Activated CD8-positive, alpha-beta T cell treated with anti-CD3 and anti-CD28 coated beads for 36 hours (primary cell): ENCODE measurements at regions of chr13 and their contacts with region 1.

Region 1: DNA sequence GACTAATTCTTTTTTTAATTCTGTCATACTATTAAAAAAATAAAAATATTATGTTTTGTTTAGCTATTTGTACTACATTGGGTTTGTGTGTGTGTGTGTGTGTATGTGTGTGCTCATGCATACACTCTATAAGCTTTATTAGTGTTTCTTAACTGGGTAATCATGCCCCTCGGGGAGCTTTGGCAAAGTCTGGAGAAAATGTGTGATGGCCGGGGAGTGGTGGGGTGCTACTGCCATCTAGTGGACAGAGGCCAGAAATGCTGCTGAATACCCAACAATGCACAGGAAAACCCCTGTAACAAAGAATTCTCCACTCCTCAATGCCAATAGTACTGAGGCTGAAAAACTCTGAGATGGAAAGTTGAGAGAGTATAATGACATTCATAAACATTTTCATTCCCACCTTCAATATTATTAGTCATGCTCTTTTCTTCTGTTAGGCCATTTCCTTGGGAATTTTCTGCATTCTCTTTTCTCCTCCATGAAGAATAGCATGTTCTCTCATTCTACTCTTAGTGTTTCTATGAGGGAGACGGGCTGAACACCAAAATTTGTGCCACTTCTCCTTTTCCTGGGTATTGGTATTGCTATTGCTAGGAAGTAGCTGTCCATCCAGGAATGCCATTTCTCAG is 157.3 kb downstream of the DNAJC3 start:
- DNase-seq: peak; percentile 69
- ATAC-seq: peak; percentile 76
- H3K4me3 Mint-ChIP-seq: no peak overlapping the region
- H3K27ac Mint-ChIP-seq: no peak overlapping the region
- H3K4me1 Mint-ChIP-seq: no peaks in the 10 kb centered on the region
- H3K27me3 Mint-ChIP-seq: peaks cover 23% of the 10 kb centered on the region
- CTCF ChIP-seq: peak; percentile 91

Region 2: GRCh38 chr13:95275322-95276036 is 558.8 kb before region 1 on chr13:
- CTCF ChIA-PET with region 1: no interaction called
- POLR2A ChIA-PET with region 1: no interaction called
- intact Hi-C with region 1: no loop called
- DNase-seq: no peak
- ATAC-seq: no peak
- H3K4me3 Mint-ChIP-seq: no peak overlapping the region
- H3K27ac Mint-ChIP-seq: no peak overlapping the region
- H3K4me1 Mint-ChIP-seq: peaks cover 2% of the 10 kb centered on the region
- H3K27me3 Mint-ChIP-seq: no peaks in the 10 kb centered on the region
- CTCF ChIP-seq: no peak

Region 3: DNA sequence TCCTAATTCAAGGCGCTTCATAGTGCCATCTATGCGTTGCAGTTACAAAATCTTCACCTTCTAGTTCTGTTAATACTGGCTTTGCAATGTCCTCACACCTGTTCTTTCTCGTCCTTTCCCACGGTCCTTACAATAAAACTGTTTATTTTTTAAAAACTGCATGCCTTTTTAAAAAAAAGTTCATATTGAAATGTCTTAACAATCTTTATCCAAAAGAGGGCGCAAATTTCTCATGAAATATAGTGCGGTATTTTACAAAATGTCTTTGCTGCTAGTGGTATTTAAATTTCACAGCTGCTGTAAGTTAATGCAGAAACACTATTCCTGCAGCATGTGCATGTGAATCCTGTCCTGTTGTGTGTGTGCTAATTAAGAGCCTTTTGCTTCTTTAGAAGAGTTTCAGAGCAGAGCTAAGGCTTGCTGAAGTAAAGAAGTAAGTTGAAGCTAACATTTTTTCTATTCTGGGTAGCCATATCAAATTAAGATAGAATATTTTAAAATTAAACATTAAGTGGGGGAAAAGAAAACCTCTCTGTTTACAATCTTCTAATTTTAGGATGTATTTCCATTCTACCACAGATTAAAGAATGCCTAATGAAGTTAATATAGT is 297.5 kb before region 1 on chr13:
- CTCF ChIA-PET with region 1: interaction called, 66 read pairs
- POLR2A ChIA-PET with region 1: no interaction called
- intact Hi-C with region 1: loop called (anchors 5 kb)
- DNase-seq: no peak
- ATAC-seq: no peak
- H3K4me3 Mint-ChIP-seq: no peak overlapping the region
- H3K27ac Mint-ChIP-seq: no peak overlapping the region
- H3K4me1 Mint-ChIP-seq: peaks cover 3% of the 10 kb centered on the region
- H3K27me3 Mint-ChIP-seq: peaks cover 23% of the 10 kb centered on the region
- CTCF ChIP-seq: peak; percentile 43

Region 4: GRCh38 chr13:95624020-95624419 is 210.2 kb before region 1 on chr13:
- CTCF ChIA-PET with region 1: interaction called, 168 read pairs
- POLR2A ChIA-PET with region 1: no interaction called
- intact Hi-C with region 1: loop called (anchors 1 kb)
- DNase-seq: peak; percentile 35
- ATAC-seq: peak; percentile 30
- H3K4me3 Mint-ChIP-seq: no peak overlapping the region
- H3K27ac Mint-ChIP-seq: no peak overlapping the region
- H3K4me1 Mint-ChIP-seq: no peaks in the 10 kb centered on the region
- H3K27me3 Mint-ChIP-seq: peaks cover 11% of the 10 kb centered on the region
- CTCF ChIP-seq: peak; percentile 75

Region 5: DNA sequence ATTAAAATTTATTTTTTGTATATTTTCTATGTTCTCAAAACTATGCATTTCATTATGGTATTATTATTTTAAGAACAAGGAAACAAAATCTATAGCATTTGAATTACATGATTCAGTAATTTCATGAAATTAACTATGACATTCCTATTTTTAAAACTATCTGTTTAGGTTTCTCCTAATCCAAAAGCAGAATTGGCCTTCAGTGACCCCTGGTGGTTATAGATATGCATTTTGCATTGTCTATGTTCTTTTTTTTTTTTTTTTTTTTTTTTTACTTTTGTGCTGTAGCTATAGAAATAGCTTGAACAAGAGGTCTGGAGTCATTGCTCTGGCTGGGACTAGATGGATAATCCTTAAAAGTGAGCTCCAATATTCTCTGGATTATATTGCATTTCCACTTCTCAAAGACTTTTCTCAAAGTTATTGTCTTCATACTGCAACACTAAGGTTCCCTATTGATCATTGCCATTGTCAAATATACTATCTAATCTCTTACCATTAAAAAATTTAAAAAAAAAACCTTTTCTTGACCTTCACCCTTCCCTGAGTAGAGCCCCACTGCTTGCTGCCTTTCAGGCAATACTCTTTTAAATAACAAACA is 173.2 kb before region 1 on chr13:
- CTCF ChIA-PET with region 1: interaction called, 20 read pairs
- POLR2A ChIA-PET with region 1: no interaction called
- intact Hi-C with region 1: no loop called
- DNase-seq: peak; percentile 26
- ATAC-seq: no peak
- H3K4me3 Mint-ChIP-seq: no peak overlapping the region
- H3K27ac Mint-ChIP-seq: no peak overlapping the region
- H3K4me1 Mint-ChIP-seq: no peaks in the 10 kb centered on the region
- H3K27me3 Mint-ChIP-seq: peaks cover 14% of the 10 kb centered on the region
- CTCF ChIP-seq: peak; percentile 76

Region 6: DNA sequence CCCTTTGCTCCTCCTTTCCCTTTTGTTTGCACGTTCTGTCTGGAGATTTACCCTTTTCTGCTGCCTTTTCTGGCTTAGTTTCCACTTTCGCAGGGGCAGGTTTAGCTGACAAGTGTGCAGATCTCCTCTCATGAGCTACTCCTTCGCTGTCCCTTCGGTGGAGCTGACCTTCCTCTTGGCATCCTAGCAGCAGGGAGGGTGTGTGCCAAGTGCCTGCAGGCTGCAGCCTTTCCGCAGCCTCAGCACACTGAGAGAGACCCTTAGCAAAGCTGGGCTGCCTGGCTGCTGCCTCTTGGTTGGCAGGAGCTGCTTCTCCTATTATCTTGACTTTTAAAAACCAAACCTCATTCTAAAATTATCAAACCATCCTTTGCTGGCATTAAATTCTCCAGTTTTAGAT is 24.8 kb before region 1 on chr13:
- CTCF ChIA-PET with region 1: interaction called, 10 read pairs
- POLR2A ChIA-PET with region 1: no interaction called
- intact Hi-C with region 1: no loop called
- DNase-seq: no peak
- ATAC-seq: no peak
- H3K4me3 Mint-ChIP-seq: no peak overlapping the region
- H3K27ac Mint-ChIP-seq: no peak overlapping the region
- H3K4me1 Mint-ChIP-seq: no peaks in the 10 kb centered on the region
- H3K27me3 Mint-ChIP-seq: peaks cover 20% of the 10 kb centered on the region
- CTCF ChIP-seq: no peak

Region 7: DNA sequence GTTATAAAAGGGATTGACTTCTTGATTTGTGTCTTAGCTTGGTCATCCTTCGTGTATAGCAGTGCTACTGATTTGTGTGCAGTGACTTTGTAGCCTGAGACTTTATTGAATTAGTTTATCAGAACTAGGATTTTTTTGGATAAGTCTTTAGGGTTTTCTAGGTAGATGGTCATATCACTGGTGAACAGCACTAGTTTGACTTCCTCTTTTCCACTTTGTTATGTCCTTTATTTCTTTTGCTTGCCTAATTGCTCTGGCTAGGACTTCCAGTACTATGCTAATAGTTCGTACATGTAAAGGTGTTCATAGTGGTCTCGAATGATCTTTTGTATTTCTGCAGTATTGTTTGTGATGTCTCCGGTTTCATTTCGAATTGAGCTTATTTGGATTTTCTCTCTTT is 11.9 kb before region 1 on chr13:
- CTCF ChIA-PET with region 1: interaction called, 38 read pairs
- POLR2A ChIA-PET with region 1: no interaction called
- intact Hi-C with region 1: no loop called
- DNase-seq: no peak
- ATAC-seq: no peak
- H3K4me3 Mint-ChIP-seq: no peak overlapping the region
- H3K27ac Mint-ChIP-seq: no peak overlapping the region
- H3K4me1 Mint-ChIP-seq: no peaks in the 10 kb centered on the region
- H3K27me3 Mint-ChIP-seq: peaks cover 15% of the 10 kb centered on the region
- CTCF ChIP-seq: no peak

Region 8: GRCh38 chr13:95870421-95870820 is 36.2 kb after region 1 on chr13:
- CTCF ChIA-PET with region 1: no interaction called
- POLR2A ChIA-PET with region 1: no interaction called
- intact Hi-C with region 1: no loop called
- DNase-seq: no peak
- ATAC-seq: no peak
- H3K4me3 Mint-ChIP-seq: no peak overlapping the region
- H3K27ac Mint-ChIP-seq: no peak overlapping the region
- H3K4me1 Mint-ChIP-seq: no peaks in the 10 kb centered on the region
- H3K27me3 Mint-ChIP-seq: peaks cover 8% of the 10 kb centered on the region
- CTCF ChIP-seq: no peak